Mammary epithelial cell (primary cell): ENCODE measurements at regions of chr19 and their contacts with region 1.

Region 1: DNA sequence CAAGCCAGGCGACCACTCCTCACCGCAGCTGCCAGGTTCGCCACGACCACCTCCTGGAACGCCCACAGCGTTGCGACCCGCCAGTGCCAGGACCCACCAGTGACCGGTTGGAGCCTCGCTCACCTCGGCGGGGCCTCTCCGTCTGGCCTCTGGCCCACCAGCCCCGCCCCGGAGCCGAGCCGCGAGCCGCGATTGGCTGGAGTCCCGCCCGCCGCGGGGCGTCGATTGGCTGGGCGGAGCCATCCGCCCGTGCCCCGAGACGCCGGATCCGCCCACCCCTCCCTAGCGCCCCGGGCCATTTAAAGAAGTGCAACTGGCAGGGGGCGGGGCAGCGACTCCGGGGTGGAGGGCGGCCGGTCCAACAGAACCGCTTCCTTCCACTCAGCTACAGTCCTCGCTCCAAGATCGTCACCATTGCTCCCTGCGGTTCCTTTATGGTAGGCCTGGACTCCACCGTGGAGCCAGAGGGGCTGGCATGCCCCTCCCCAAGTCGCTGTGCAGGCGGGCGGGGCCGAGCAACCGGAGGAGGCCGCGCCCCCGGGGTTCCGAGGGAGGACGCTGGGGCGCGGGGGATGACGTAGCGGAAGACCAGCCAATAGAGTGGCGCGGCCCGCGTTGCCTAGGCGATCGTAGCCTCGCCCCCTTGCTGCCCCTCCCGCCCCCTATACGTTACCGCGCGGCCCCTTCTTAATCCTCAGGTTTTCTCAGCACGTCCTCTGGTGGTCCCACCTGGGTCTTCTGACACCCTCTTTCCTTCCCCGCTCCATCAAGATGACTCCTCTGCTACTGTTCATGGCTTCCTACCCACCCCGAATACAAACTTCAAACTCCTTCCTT is at the start of gene SERTAD3:
- DNase-seq: peak; percentile 94
- H3K4me3 ChIP-seq: peak within 1 kb of the TSS; percentile 92 to 100 (median 95)
- H3K27ac ChIP-seq: peak within 1 kb of the TSS; percentile 95
- H3K4me1 ChIP-seq: peaks cover 35% of the 10 kb centered on the region
- H3K27me3 ChIP-seq: no peaks in the 10 kb centered on the region
- CTCF ChIP-seq: peak in 1 of 2 donors; percentile 7
- total RNA-seq, gene SERTAD3: 34.3 to 35.8 TPM

Region 2: GRCh38 chr19:39983695-39984305 is 460.6 kb before region 1 on chr19:
- CTCF ChIA-PET with region 1: no interaction called
- dilution Hi-C with region 1: no loop called
- in situ Hi-C with region 1: no loop called
- intact Hi-C with region 1: no loop called
- DNase-seq: no peak
- H3K4me3 ChIP-seq: no peak overlapping the region
- H3K27ac ChIP-seq: no peak overlapping the region
- H3K4me1 ChIP-seq: no peaks in the 10 kb centered on the region
- H3K27me3 ChIP-seq: no peaks in the 10 kb centered on the region
- CTCF ChIP-seq: no peak

Region 3: GRCh38 chr19:40392872-40393845 is 51.3 kb before region 1 on chr19:
- CTCF ChIA-PET with region 1: no interaction called
- dilution Hi-C with region 1: no loop called
- in situ Hi-C with region 1: no loop called
- intact Hi-C with region 1: no loop called
- DNase-seq: peak; percentile 40
- H3K4me3 ChIP-seq: no peak overlapping the region
- H3K27ac ChIP-seq: no peak overlapping the region
- H3K4me1 ChIP-seq: peaks cover 8% of the 10 kb centered on the region
- H3K27me3 ChIP-seq: no peaks in the 10 kb centered on the region
- CTCF ChIP-seq: peak; percentile 50 to 76

Region 4: GRCh38 chr19:40433391-40434216 is 10.8 kb before region 1 on chr19:
- CTCF ChIA-PET with region 1: no interaction called
- dilution Hi-C with region 1: no loop called
- in situ Hi-C with region 1: no loop called
- intact Hi-C with region 1: loop called (anchors 1 kb)
- DNase-seq: peak; percentile 83
- H3K4me3 ChIP-seq: peak overlapping the region; percentile 21 to 35 (median 32)
- H3K27ac ChIP-seq: peak overlapping the region; percentile 80
- H3K4me1 ChIP-seq: peaks cover 9% of the 10 kb centered on the region
- H3K27me3 ChIP-seq: no peaks in the 10 kb centered on the region
- CTCF ChIP-seq: no peak

Region 5: GRCh38 chr19:40640744-40641143 is 196.3 kb after region 1 on chr19:
- CTCF ChIA-PET with region 1: no interaction called
- dilution Hi-C with region 1: no loop called
- in situ Hi-C with region 1: no loop called
- intact Hi-C with region 1: no loop called
- DNase-seq: no peak
- H3K4me3 ChIP-seq: no peak overlapping the region
- H3K27ac ChIP-seq: no peak overlapping the region
- H3K4me1 ChIP-seq: peaks cover 2% of the 10 kb centered on the region
- H3K27me3 ChIP-seq: no peaks in the 10 kb centered on the region
- CTCF ChIP-seq: no peak